A549 (cell line): ENCODE measurements at regions of chr5 and their contacts with region 1.

Region 1: GRCh38 chr5:102782311-102782770 is 27.2 kb downstream of the PAM start:
- DNase-seq: no peak
- ATAC-seq: no peak
- H3K4me3 ChIP-seq: no peak overlapping the region
- H3K27ac ChIP-seq: no peak overlapping the region
- H3K4me1 ChIP-seq: no peaks in the 10 kb centered on the region
- CTCF ChIP-seq: no peak
- EP300 ChIP-seq: no peak
- POLR2A ChIP-seq: no peak
- RAD21 ChIP-seq: no peak

Region 2: GRCh38 chr5:103139264-103139865 is 357.0 kb after region 1 on chr5:
- CTCF ChIA-PET with region 1: interaction called, 17 read pairs
- POLR2A ChIA-PET with region 1: no interaction called
- DNase-seq: peak; percentile 61 to 76
- ATAC-seq: peak; percentile 99
- H3K4me3 ChIP-seq: no peak overlapping the region
- H3K27ac ChIP-seq: no peak overlapping the region
- H3K4me1 ChIP-seq: peaks cover 5% of the 10 kb centered on the region; the same call in 1 of the 3 replicates
- CTCF ChIP-seq: peak; percentile 91
- EP300 ChIP-seq: no peak
- POLR2A ChIP-seq: no peak
- RAD21 ChIP-seq: peak; percentile 89 to 93